ENCODE measurements at regions of chr4 and their contacts with region 1.

Region 1: GRCh38 chr4:139099366-139099982 is 77.5 kb downstream of the ELF2 start:
- DNase-seq: peak in 3 of 4 donors; percentile 49 to 86 (median 72)
- ATAC-seq: peak; percentile 96
- H3K4me3 ChIP-seq: no peak overlapping the region
- H3K27ac ChIP-seq: no peak overlapping the region
- H3K4me1 ChIP-seq: peaks cover 0 to 4% of the 10 kb centered on the region in 2 donors
- H3K27me3 ChIP-seq: no peaks in the 10 kb centered on the region
- CTCF ChIP-seq: peak; percentile 82 to 85

Region 2: DNA sequence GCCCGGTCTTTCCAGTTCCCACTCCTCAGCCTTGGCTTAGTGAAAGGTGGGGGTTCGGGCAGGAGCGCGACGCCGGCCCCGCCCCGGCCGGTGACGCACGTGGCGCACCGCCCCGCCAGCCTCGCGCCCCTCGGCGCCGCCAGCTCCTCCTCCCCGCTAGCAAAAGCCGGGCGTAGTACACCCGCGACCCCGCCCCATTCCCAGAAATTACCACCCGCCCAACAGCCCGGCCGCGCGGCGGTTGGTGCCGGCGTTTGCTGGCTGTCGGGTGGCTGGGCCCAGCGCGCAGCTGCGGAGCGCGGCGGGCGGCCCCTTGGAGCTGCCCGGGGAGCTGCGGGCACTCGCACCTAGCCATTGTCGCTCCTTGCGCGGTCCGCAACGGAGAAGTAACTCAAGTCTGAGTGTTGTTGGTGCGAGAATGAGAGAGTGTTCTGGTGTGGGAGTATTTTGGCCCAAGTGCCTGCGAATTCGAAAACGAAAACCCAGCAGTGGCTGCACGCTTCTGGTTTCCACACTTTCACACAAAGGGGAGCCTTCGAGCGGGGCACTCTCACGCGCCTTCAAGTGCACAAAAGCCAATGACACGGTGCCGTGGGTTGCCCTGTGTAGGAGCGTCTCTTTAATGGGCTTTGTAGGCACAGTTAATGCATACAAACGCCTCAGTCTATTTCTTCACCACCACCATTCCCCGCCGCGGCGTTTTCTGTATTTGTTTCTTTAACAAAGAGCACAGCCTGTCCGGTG is 78.6 kb after region 1 on chr4:
- intact Hi-C with region 1: loop called in 1 of 2 experiments (anchors 10 kb)
- DNase-seq: peak; percentile 93 to 99 (median 97)
- ATAC-seq: peak; percentile 80
- H3K4me3 ChIP-seq: peak overlapping the region; percentile 84
- H3K27ac ChIP-seq: peak overlapping the region; percentile 99 to 100
- H3K4me1 ChIP-seq: peaks cover 5 to 30% of the 10 kb centered on the region in 2 donors
- H3K27me3 ChIP-seq: no peaks in the 10 kb centered on the region
- CTCF ChIP-seq: no peak